Activated CD8-positive, alpha-beta T cell treated with anti-CD3 and anti-CD28 coated beads for 36 hours (primary cell): ENCODE measurements at regions of chr11 and their contacts with region 1.

Region 1: DNA sequence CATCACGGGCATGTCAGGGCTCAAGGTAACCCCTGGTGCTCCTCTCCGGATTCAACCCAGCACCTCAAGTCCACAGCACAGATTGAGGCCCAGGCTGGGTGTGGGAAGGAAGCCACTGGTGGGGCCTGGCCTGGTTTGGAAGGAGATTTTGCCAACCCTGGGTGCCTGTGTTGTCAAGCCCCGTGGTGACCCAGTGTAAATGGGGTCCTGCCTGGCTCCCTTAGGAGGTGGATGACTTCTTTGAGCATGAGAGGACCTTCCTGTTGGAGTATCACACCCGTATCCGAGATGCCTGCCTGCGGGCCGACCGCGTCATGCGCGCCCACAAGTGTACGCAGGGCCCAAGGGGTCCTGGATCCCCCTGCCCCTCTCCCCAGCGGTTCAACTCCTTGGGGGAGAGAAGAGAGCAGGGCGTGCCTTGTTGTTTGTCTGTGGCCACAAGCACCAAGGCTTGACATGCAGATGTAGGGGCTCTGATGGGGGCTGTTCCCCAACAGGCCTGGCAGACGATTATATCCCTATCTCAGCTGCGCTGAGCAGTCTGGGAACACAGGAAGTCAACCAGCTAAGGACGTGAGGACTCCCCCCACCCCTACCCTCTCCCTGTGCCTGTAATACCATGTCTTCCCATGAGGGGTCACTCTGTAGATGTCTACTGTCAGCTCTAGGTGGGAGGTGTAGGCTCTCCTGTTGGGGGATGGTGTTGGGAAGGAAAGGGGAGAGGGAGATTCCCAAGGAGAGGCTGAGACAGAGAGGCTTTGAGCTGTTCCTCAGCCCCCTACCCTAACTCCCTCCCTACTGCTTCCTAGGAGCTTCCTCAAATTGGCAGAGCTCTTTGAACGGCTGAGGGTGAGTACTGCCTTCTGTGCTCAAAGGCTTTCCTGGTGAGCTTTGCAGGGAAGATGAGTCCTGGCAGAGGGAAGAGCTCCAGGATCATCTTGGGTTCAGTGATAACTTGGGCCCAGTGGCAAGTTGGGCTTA is 6.9 kb downstream of the CFL1 start:
- DNase-seq: peak; percentile 44
- ATAC-seq: peak; percentile 57
- H3K4me3 Mint-ChIP-seq: no peak overlapping the region
- H3K27ac Mint-ChIP-seq: peak overlapping the region; percentile 33
- H3K4me1 Mint-ChIP-seq: peaks cover 24% of the 10 kb centered on the region
- H3K27me3 Mint-ChIP-seq: no peaks in the 10 kb centered on the region
- CTCF ChIP-seq: peak; percentile 72

Region 2: GRCh38 chr11:65802841-65803240 is 48.3 kb before region 1 on chr11:
- CTCF ChIA-PET with region 1: no interaction called
- POLR2A ChIA-PET with region 1: no interaction called
- intact Hi-C with region 1: no loop called
- DNase-seq: no peak
- ATAC-seq: no peak
- H3K4me3 Mint-ChIP-seq: no peak overlapping the region
- H3K27ac Mint-ChIP-seq: no peak overlapping the region
- H3K4me1 Mint-ChIP-seq: peaks cover 3% of the 10 kb centered on the region
- H3K27me3 Mint-ChIP-seq: peaks cover 36% of the 10 kb centered on the region
- CTCF ChIP-seq: no peak

Region 3: GRCh38 chr11:65833297-65834030 is 17.7 kb before region 1 on chr11 and contains the start of gene SNX32:
- CTCF ChIA-PET with region 1: interaction called, 28 read pairs
- POLR2A ChIA-PET with region 1: interaction called, 24 read pairs
- intact Hi-C with region 1: no loop called
- DNase-seq: peak; percentile 98
- ATAC-seq: peak; percentile 100
- H3K4me3 Mint-ChIP-seq: no peak within 1 kb of the TSS
- H3K27ac Mint-ChIP-seq: no peak within 1 kb of the TSS
- H3K4me1 Mint-ChIP-seq: peaks cover 28% of the 10 kb centered on the region
- H3K27me3 Mint-ChIP-seq: peaks cover 2% of the 10 kb centered on the region
- CTCF ChIP-seq: no peak
- total RNA-seq, gene SNX32: 1.6 to 2.1 TPM